ENCODE measurements at regions of chr4 and their contacts with region 1.

Region 1: DNA sequence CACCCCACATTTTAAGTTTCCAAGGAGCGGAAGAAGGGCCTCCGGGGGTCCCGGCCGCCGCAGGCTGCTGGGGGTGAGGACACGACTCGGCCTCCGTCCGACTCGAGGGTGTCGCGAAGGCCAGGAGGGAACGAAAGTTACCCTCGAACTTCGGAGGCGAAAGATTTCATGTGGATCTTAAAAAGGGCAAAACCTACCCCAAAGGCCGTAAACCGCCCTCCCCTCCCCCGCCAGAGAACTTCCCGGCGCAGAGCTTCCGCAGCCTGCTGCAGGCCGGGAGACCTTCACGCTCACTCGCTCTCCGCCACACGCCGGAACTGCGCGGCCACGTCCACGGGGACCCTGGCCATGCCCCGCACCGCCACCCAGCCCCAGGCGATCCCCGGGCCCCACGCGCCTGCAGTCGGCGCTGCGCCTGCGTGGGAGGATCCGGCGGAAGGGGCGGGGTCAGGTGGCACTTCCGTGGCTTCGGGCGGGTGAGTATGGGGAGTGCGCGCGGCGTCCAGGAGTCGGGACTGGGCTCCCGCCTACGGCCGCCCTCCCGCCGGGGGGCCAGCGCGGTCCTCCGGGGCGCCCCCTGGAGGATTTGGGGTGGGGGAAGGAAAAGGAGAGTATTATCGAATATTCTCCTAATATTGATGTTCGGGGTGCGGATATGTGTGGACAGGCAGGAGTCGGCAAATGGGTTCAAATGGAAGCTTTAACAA is at the start of gene MMAA:
- DNase-seq: peak; percentile 90
- H3K4me3 Mint-ChIP-seq: peak within 1 kb of the TSS; percentile 95
- H3K27ac Mint-ChIP-seq: peak within 1 kb of the TSS; percentile 99
- H3K4me1 Mint-ChIP-seq: peaks cover 9% of the 10 kb centered on the region
- H3K27me3 Mint-ChIP-seq: no peaks in the 10 kb centered on the region
- CTCF ChIP-seq: peak; percentile 65
- total RNA-seq, gene MMAA: 9.5 and 9.7 TPM in 2 replicates

Region 2: GRCh38 chr4:145097821-145098674 is 521.0 kb before region 1 on chr4 and contains the starts of genes ABCE1 and ANAPC10:
- CTCF ChIA-PET with region 1: interaction called, 4 read pairs
- POLR2A ChIA-PET with region 1: no interaction called
- intact Hi-C with region 1: loop called (anchors 10 kb)
- DNase-seq: peak; percentile 98
- H3K4me3 Mint-ChIP-seq: peak within 1 kb of the TSS; percentile 94
- H3K27ac Mint-ChIP-seq: peak within 1 kb of the TSS; percentile 99
- H3K4me1 Mint-ChIP-seq: peaks cover 10% of the 10 kb centered on the region
- H3K27me3 Mint-ChIP-seq: no peaks in the 10 kb centered on the region
- CTCF ChIP-seq: peak; percentile 12
- total RNA-seq, gene ABCE1: 136 and 140 TPM in 2 replicates
- total RNA-seq, gene ANAPC10: 32.2 and 38.9 TPM in 2 replicates

Region 3: DNA sequence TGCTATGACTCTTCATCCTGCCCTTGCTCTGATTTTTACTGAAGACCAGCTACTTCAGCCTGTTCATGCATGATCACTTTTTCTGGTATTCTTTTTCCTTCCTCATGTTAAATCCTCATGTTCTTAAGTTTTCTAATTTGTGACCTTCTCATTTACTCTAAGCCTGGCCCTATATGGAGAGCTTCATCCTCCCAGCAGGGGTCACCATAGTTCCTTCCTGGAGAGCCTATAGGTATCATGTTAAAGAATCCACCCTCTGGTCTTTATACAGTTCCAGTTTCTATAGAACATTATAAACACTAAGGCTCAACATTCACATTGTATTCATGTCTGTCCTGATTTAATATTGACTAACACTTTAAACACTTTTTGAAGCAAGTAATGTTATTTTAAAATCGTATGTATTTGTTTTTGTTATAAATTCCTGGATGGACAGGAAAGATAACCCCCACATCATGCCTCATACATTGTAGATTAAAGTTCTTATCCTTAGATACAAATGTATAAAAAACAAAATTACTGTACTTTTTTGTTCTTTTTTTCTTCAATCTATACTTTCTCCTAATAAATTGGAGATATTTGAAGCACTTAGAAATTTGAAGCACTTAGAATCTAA is 384.9 kb before region 1 on chr4:
- CTCF ChIA-PET with region 1: interaction called, 28 read pairs
- POLR2A ChIA-PET with region 1: interaction called, 6 read pairs
- intact Hi-C with region 1: no loop called
- DNase-seq: peak; percentile 84
- H3K4me3 Mint-ChIP-seq: no peak overlapping the region
- H3K27ac Mint-ChIP-seq: no peak overlapping the region
- H3K4me1 Mint-ChIP-seq: no peaks in the 10 kb centered on the region
- H3K27me3 Mint-ChIP-seq: no peaks in the 10 kb centered on the region
- CTCF ChIP-seq: peak; percentile 82

Region 4: DNA sequence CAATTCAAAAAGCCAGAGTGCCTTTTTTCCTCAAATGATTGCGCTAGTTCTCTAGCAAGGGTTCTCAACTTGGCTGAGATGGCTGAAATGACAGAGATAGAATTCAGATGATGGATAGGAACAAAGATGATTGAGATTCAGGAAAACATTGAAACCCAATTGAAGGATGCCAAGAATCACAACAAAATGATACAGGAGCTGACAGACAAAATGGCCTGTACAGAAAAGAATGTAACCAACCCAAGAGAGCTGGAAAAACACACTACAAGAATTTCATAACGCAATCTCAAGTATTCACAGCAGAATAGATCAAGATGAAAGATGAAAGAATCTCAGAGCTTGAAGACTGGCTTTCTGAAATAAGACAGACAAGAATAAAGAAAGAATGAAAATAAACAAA is 51.6 kb before region 1 on chr4:
- CTCF ChIA-PET with region 1: no interaction called
- POLR2A ChIA-PET with region 1: no interaction called
- intact Hi-C with region 1: no loop called
- DNase-seq: no peak
- H3K4me3 Mint-ChIP-seq: no peak overlapping the region
- H3K27ac Mint-ChIP-seq: no peak overlapping the region
- H3K4me1 Mint-ChIP-seq: peaks cover 5% of the 10 kb centered on the region
- H3K27me3 Mint-ChIP-seq: no peaks in the 10 kb centered on the region
- CTCF ChIP-seq: no peak

Region 5: DNA sequence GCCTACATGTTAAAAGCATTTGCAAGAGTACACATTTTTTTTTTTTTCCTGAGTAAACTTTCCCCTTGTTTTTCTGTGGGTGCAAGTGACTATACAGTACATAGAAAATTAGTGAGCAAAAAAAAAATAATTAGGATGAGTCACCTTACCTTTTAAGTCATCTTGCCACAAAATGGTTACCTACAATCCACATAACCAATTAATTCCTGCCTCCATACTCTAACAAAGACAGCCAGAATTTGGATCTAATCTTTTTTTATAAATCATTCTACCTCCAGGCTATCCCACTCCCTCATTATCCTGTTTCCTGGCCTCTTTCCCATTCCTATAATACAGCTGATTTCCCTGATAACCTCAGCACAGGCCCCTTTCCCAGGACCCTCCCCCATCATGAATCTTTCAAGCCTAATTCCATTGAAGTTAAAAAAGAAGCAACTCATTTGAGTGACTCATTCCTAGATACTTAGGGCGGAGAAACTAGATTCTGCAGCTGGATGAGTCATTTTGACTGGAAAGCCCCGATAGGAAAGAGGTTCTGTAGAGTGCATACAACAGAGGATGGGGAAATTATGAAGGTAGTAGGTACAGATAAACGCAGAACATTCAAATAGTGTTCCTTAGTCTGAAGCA is 189.1 kb after region 1 on chr4:
- CTCF ChIA-PET with region 1: interaction called, 4 read pairs
- POLR2A ChIA-PET with region 1: interaction called, 8 read pairs
- intact Hi-C with region 1: loop called (anchors 1 kb)
- DNase-seq: peak; percentile 97
- H3K4me3 Mint-ChIP-seq: peak overlapping the region; percentile 41
- H3K27ac Mint-ChIP-seq: peak overlapping the region; percentile 95
- H3K4me1 Mint-ChIP-seq: peaks cover 32% of the 10 kb centered on the region
- H3K27me3 Mint-ChIP-seq: no peaks in the 10 kb centered on the region
- CTCF ChIP-seq: no peak

Region 6: GRCh38 chr4:146059865-146060264 is 440.8 kb after region 1 on chr4:
- CTCF ChIA-PET with region 1: interaction called, 4 read pairs
- POLR2A ChIA-PET with region 1: no interaction called
- intact Hi-C with region 1: loop called (anchors 10 kb)
- DNase-seq: no peak
- H3K4me3 Mint-ChIP-seq: no peak overlapping the region
- H3K27ac Mint-ChIP-seq: no peak overlapping the region
- H3K4me1 Mint-ChIP-seq: no peaks in the 10 kb centered on the region
- H3K27me3 Mint-ChIP-seq: no peaks in the 10 kb centered on the region
- CTCF ChIP-seq: no peak

Region 7: DNA sequence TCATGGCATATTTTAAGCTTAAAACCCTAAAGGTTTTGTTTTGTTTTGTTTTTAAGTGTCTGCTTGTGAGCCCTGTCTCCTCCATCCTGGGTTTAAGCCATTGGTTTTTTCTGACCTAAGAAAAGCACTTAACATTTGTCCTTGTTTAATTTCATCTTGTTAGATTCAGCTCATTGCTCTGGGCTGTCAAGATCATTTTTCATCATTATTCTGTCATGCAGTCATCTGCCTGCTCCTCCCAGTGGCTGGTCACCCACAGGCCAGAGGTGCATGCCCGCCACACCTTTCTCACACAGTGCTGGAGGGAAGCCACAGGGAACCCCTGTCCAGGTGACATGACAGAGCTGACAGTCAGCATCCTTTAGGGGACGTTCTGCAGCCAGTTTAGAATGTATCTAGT is 583.6 kb after region 1 on chr4:
- CTCF ChIA-PET with region 1: no interaction called
- POLR2A ChIA-PET with region 1: no interaction called
- intact Hi-C with region 1: no loop called
- DNase-seq: no peak
- H3K4me3 Mint-ChIP-seq: no peak overlapping the region
- H3K27ac Mint-ChIP-seq: no peak overlapping the region
- H3K4me1 Mint-ChIP-seq: no peaks in the 10 kb centered on the region
- H3K27me3 Mint-ChIP-seq: no peaks in the 10 kb centered on the region
- CTCF ChIP-seq: no peak

Region 8: GRCh38 chr4:147096667-147097604 is 1477.9 kb after region 1 on chr4:
- CTCF ChIA-PET with region 1: no interaction called
- POLR2A ChIA-PET with region 1: no interaction called
- intact Hi-C with region 1: loop called (anchors 10 kb)
- DNase-seq: peak; percentile 84
- H3K4me3 Mint-ChIP-seq: peak overlapping the region; percentile 12
- H3K27ac Mint-ChIP-seq: peak overlapping the region; percentile 80
- H3K4me1 Mint-ChIP-seq: peaks cover 24% of the 10 kb centered on the region
- H3K27me3 Mint-ChIP-seq: no peaks in the 10 kb centered on the region
- CTCF ChIP-seq: peak; percentile 50